ENCODE measurements at regions of chr12 and their contacts with region 1.

Region 1: DNA sequence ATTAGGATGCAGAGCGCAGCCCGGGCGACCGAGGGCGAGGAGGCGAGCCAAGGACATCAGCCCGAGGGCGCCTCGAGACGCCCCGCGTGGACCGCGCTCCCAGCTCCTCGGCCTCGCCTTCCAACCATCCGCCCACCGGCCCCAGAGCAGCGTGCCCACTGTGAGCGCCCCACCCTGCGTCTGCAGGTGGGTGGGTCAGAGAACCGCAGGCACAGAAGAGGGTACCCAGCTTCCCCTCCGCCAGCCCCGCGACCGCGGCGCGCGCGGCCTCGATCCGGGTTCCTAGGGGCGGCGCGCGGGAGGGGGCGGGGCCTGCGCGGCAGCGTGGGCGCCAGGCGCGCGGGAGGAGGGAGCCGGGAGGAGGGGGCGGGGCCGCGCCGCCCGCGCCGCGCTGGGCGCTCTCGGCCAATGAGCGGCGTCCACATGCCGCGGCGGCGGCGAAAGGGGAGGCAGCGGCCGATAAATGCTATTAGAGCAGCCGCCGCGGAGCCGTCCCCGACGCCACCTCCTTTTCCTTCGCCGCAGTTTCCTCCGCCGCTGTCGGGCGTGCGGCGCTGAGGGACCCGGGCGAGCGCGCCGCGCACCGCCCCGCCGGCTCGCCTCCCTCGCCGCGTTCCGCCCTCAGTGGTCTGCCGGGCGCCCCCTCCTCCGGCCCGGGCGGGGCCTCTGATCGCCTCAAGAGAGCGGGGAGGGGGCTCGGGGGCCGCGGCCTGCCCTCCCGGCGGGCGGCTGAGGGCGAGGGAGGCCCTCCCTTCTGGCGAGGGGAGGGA is at the start of gene ATP2A2:
- DNase-seq: peak; percentile 85 to 90
- ATAC-seq: peak; percentile 78 to 87
- H3K4me3 ChIP-seq: peak within 1 kb of the TSS; percentile 81
- H3K27ac ChIP-seq: peak within 1 kb of the TSS; percentile 98 to 99
- H3K4me1 ChIP-seq: peaks cover 46% of the 10 kb centered on the region
- CTCF ChIP-seq: no peak
- EP300 ChIP-seq: no peak
- POLR2A ChIP-seq: peak; percentile 88
- RAD21 ChIP-seq: peak in 1 of 2 experiments; percentile 16; a peak in 2 of 5 replicates
- polyA plus RNA-seq, gene ATP2A2: 415 and 431 TPM in 2 replicates

Region 2: GRCh38 chr12:110100315-110100970 is 180.5 kb before region 1 on chr12:
- CTCF ChIA-PET with region 1: interaction called, 12 read pairs
- POLR2A ChIA-PET with region 1: no interaction called
- DNase-seq: peak; percentile 55 to 84
- ATAC-seq: peak; percentile 54 to 69; a peak in 5 of 6 replicates
- H3K4me3 ChIP-seq: no peak overlapping the region
- H3K27ac ChIP-seq: peak overlapping the region; percentile 73 to 96
- H3K4me1 ChIP-seq: peaks cover 25% of the 10 kb centered on the region
- CTCF ChIP-seq: peak; percentile 97
- EP300 ChIP-seq: no peak
- POLR2A ChIP-seq: no peak
- RAD21 ChIP-seq: peak; percentile 97 to 99

Region 3: DNA sequence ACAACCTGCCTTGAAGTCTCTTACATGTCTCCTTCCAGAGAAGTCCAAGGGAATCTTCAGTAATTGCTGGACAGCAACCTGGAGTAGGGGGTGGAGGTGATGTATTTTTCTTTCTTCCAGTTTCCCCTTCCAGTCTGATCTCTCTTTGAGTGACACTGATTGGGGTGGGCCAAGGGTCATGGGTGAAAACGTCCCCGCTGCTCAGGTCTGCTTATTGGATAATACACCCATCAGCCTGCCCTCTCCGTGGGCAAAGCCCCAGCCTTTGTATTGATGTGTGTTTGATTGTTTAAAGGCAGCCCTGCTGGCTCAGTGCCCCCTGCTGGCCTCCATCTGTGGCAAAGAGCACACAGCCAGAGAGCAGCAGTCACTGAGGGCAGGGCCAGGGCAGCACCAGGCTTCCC is 35.6 kb before region 1 on chr12:
- CTCF ChIA-PET with region 1: interaction called, 12 read pairs
- POLR2A ChIA-PET with region 1: interaction called, 40 read pairs
- DNase-seq: peak in 1 of 2 experiments; percentile 73
- ATAC-seq: peak in 1 of 2 experiments; percentile 18; a peak in 3 of 6 replicates
- H3K4me3 ChIP-seq: no peak overlapping the region
- H3K27ac ChIP-seq: peak overlapping the region; percentile 96 to 97
- H3K4me1 ChIP-seq: peaks cover 61% of the 10 kb centered on the region
- CTCF ChIP-seq: peak; percentile 42
- EP300 ChIP-seq: no peak
- POLR2A ChIP-seq: no peak
- RAD21 ChIP-seq: peak; percentile 47 to 68; a peak in 4 of 5 replicates

Region 4: DNA sequence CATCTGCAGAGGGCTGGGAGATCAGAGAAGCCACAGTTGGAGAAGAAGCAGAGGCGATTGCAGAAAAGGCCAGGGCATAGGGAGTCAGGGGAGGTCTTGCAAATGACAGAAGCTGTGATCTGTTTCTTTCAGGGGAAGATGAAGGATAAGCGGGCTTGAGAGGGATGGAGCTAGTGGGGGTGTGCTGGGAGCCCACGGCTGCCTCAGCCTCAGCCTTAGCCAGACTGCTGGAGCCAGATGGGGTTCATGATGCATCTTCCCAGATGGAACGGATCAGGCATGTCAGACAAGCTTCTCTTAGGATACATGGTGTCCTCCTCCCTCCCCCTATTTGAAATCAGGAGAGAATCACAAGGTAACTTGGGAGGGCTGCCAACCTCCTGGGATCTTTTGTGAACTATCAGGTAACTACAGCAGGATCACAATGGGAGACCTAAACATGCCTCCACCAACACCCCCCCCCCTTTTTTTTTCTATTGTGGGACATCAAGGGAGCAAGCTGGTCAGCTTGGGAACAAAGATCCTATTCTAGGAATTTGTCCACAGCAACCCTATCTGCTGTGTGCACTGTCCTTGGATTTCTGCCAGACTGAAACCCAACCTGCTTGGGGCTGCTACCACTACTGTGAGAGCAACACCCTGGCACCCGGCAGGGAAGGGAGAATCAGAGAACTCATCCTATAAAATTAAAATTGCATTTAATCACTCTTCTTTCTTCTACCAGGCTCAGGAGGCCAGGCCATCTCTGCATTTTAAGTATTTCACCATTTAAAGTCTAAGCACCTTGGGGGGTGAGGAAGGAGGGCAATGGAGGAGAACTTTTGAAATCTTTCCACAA is 10.6 kb before region 1 on chr12:
- CTCF ChIA-PET with region 1: interaction called, 12 read pairs
- POLR2A ChIA-PET with region 1: interaction called, 55 read pairs
- DNase-seq: peak; percentile 65 to 82
- ATAC-seq: peak; percentile 66 to 72
- H3K4me3 ChIP-seq: peak overlapping the region; percentile 31; the same call in 1 of the 3 replicates
- H3K27ac ChIP-seq: peak overlapping the region; percentile 97 to 99
- H3K4me1 ChIP-seq: peaks cover 80% of the 10 kb centered on the region
- CTCF ChIP-seq: no peak
- EP300 ChIP-seq: no peak
- POLR2A ChIP-seq: no peak
- RAD21 ChIP-seq: no peak

Measured in A549 (cell line).